Activated naive CD4-positive, alpha-beta T cell treated with anti-CD3 and anti-CD28 coated beads for 36 hours (primary cell): ENCODE measurements at regions of chr12 and their contacts with region 1.

Region 1: GRCh38 chr12:119980242-119980641 is 8.8 kb upstream of the BICDL1 start:
- DNase-seq: peak; percentile 43
- H3K4me3 Mint-ChIP-seq: peak overlapping the region; percentile 54
- H3K27ac Mint-ChIP-seq: peak overlapping the region; percentile 84
- H3K4me1 Mint-ChIP-seq: peaks cover 17% of the 10 kb centered on the region
- H3K27me3 Mint-ChIP-seq: no peaks in the 10 kb centered on the region

Region 2: GRCh38 chr12:120006209-120006975 is 26.1 kb after region 1 on chr12:
- CTCF ChIA-PET with region 1: interaction called, 3 read pairs
- intact Hi-C with region 1: loop called (anchors 1 kb)
- DNase-seq: peak; percentile 72
- H3K4me3 Mint-ChIP-seq: peak overlapping the region; percentile 56
- H3K27ac Mint-ChIP-seq: peak overlapping the region; percentile 97
- H3K4me1 Mint-ChIP-seq: peaks cover 70% of the 10 kb centered on the region
- H3K27me3 Mint-ChIP-seq: no peaks in the 10 kb centered on the region